Right cardiac atrium (tissue), 5 donors: ENCODE measurements at regions of chr12 and their contacts with region 1.

Region 1: DNA sequence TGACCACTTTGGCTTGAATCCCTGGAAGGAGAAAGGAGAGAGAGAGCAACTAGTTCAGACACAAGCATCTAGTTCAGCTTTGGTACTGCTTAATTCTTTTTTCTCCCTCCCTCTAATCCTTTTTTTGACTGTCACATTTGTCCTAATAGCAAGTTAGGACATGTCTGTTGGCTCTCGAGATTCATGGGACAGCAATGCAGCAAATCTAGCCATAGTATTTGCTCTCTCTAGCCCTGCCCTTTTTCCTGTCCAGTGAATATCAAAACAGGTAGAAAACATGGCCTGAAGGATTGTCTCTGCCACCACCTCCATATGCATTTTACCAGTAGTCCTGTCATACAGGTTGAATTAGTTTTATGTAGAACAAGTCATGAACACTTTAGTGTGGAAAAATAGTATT is 116.4 kb downstream of the PTPRB start:
- DNase-seq: no peak
- ATAC-seq: no peak
- H3K4me3 ChIP-seq: no peak overlapping the region
- H3K27ac ChIP-seq: no peak overlapping the region
- H3K4me1 ChIP-seq: no peaks in the 10 kb centered on the region
- H3K27me3 ChIP-seq: no peaks in the 10 kb centered on the region

Region 2: GRCh38 chr12:70110085-70110484 is 410.8 kb before region 1 on chr12:
- intact Hi-C with region 1: no loop called
- DNase-seq: no peak
- ATAC-seq: no peak
- H3K4me3 ChIP-seq: no peak overlapping the region
- H3K27ac ChIP-seq: no peak overlapping the region
- H3K4me1 ChIP-seq: no peaks in the 10 kb centered on the region
- H3K27me3 ChIP-seq: no peaks in the 10 kb centered on the region

Region 3: DNA sequence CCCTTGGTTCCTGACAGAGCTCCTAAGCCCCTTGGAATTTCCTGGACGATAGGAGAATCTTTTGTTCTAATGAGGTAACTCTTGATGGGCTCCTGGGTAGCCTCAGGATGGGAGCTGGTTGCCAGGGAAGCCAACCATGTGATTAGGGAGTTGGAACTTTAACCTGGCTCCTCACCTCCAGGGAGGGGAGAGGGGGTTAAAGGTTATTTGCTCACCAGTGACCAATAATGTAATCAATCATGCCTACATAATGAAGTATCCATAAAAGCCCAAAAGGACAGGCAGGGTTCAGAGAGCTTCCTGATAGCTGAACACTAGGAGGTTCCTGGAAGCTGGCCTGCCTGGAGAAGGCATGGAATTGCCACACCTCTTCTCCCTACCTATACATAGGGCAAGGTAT is 283.9 kb before region 1 on chr12:
- intact Hi-C with region 1: no loop called
- DNase-seq: no peak
- ATAC-seq: no peak
- H3K4me3 ChIP-seq: no peak overlapping the region
- H3K27ac ChIP-seq: no peak overlapping the region
- H3K4me1 ChIP-seq: no peaks in the 10 kb centered on the region
- H3K27me3 ChIP-seq: no peaks in the 10 kb centered on the region

Region 4: DNA sequence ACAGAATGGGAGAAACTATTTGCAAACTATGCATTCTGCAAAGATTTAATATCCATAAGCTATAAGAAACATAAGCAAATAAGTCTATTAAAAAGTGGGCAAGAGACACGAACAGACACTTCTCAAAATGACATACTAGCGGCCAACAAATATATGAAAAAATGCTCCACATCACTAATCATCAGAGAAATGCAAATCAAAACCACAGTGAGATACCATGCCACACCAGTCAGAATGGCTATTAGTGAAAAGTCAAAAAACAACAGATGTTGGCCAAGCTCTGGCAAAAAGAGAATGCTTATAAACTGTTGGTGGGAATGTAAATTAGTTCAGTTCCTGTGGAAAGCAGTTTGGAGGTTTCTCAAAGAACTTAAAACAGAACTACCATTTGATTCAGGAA is 33.4 kb before region 1 on chr12:
- intact Hi-C with region 1: no loop called
- DNase-seq: no peak
- ATAC-seq: no peak
- H3K4me3 ChIP-seq: no peak overlapping the region
- H3K27ac ChIP-seq: no peak overlapping the region
- H3K4me1 ChIP-seq: no peaks in the 10 kb centered on the region
- H3K27me3 ChIP-seq: no peaks in the 10 kb centered on the region

Region 5: DNA sequence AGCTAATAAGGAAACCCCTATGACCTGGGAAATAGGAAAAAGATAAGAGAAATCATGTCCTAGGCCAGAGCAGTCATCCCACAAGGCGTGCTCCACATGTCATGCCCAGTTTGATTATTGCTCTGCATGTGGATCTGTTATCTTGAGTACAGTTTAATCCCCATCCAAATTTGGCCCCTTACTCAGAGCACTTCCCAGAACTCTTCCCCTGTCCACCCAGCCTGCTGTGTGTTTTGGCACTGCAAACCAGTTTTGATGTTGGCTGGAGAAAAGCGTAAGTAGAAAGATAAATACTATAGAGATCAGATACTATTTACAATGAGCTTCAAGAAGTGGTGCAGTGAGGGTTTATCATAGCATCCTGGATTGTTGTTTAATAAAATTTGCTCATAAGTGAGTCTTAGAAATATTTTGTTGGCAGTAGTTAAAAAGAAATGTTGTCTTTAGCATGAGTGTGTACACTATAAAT is 32.6 kb after region 1 on chr12:
- intact Hi-C with region 1: loop called in 1 of 4 experiments (anchors 2 kb)
- DNase-seq: peak in 1 of 3 donors; percentile 24
- ATAC-seq: peak; percentile 83 to 95
- H3K4me3 ChIP-seq: no peak overlapping the region
- H3K27ac ChIP-seq: no peak overlapping the region
- H3K4me1 ChIP-seq: peaks cover 2% of the 10 kb centered on the region
- H3K27me3 ChIP-seq: no peaks in the 10 kb centered on the region